ENCODE measurements at regions of chr4 and their contacts with region 1.

Region 1: GRCh38 chr4:158253350-158253980 is 43.2 kb downstream of the TMEM144 start:
- DNase-seq: peak in 1 of 2 experiments; percentile 10
- H3K4me3 ChIP-seq: no peak overlapping the region
- H3K27ac ChIP-seq: no peak overlapping the region
- H3K4me1 ChIP-seq: no peaks in the 10 kb centered on the region
- H3K27me3 ChIP-seq: no peaks in the 10 kb centered on the region
- CTCF ChIP-seq: peak; percentile 59

Region 2: DNA sequence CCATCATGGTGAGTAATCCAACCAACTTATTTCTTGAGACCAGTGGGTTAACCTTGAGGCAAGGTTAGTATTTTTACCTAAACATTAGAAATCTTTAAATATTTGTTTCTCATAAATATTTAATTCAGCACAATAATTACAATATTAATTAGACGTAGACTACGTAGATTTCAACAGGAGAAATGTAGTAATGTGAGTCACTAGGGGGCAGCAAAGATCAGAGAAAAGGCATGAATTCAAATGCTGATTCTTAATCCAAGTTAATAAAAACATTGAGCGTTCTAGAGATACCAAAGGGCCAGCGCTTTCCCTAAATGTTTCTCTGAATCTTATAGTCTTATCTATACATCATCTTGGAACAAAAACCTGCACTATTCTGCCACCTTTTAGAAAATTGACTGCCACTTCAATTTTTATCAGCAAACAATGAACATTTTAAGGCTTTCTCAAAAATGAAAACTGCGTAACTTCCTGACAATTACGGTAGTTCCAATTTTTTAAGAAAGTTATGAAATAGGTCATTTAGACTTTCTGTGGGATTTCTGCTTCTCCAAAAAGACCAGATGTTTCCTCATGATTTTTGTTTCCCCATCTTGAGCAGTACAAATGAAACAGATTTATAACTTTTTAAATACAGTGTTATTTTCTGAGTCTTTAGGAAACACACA is 261.3 kb before region 1 on chr4:
- CTCF ChIA-PET with region 1: no interaction called
- POLR2A ChIA-PET with region 1: no interaction called
- intact Hi-C with region 1: loop called (anchors 1 kb)
- DNase-seq: peak in 1 of 2 experiments; percentile 30
- H3K4me3 ChIP-seq: no peak overlapping the region
- H3K27ac ChIP-seq: no peak overlapping the region
- H3K4me1 ChIP-seq: peaks cover 9% of the 10 kb centered on the region
- H3K27me3 ChIP-seq: no peaks in the 10 kb centered on the region
- CTCF ChIP-seq: peak; percentile 84

Region 3: DNA sequence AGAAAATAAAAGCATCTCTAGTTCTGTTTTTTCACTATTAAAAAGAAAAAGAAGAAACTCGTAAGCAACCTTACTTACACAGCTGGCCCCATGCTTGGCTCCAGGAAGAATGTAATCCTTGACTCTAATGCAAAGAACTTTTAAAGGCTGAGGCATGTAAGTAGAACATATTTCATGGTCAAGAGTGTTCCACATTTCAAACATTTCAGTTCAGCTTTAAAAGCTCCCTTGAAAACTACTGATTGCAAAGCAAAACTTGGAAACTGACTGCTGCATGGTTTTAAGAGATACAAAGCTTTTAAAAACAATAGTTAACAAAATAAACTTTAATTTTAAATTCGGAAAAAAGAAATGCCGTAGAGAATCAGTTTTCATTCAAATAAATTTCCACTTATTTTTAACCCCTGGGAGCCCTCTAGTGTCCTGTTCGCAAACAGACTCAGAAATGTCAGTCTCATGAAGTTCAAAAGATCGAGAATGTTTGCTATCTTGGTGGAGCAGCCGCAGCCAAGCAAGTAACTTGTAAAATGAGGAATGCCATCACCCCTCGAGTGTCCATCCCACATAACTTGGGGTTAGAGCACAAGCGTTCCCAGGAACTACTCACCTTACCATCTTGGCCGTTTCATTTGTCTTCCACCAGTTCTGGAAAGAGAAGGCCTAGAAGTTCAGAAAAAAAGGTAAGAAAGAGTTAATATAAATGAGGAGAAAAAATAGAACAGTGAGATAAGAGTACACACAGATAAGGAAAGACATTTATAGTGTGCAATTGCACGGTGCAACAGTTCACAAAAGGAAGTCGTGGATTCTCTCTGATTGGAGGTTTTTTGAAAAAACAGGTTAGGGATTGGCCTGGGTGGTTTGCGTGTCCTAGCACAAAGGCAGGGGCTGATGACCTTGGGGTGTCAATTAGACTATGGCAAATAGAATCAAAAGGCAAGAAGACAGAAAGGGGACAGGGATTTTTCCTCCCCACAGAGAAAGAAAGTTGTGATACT is 80.9 kb before region 1 on chr4 and contains the start of gene GASK1B:
- CTCF ChIA-PET with region 1: no interaction called
- POLR2A ChIA-PET with region 1: no interaction called
- intact Hi-C with region 1: loop called (anchors 5 kb)
- DNase-seq: peak; percentile 29 to 37
- H3K4me3 ChIP-seq: no peak within 1 kb of the TSS; the same call in 1 of the 2 replicates
- H3K27ac ChIP-seq: no peak within 1 kb of the TSS
- H3K4me1 ChIP-seq: peaks cover 30% of the 10 kb centered on the region
- H3K27me3 ChIP-seq: no peaks in the 10 kb centered on the region
- CTCF ChIP-seq: peak; percentile 76
- total RNA-seq, gene GASK1B: 2.8 and 4.1 TPM in 2 replicates

Region 4: DNA sequence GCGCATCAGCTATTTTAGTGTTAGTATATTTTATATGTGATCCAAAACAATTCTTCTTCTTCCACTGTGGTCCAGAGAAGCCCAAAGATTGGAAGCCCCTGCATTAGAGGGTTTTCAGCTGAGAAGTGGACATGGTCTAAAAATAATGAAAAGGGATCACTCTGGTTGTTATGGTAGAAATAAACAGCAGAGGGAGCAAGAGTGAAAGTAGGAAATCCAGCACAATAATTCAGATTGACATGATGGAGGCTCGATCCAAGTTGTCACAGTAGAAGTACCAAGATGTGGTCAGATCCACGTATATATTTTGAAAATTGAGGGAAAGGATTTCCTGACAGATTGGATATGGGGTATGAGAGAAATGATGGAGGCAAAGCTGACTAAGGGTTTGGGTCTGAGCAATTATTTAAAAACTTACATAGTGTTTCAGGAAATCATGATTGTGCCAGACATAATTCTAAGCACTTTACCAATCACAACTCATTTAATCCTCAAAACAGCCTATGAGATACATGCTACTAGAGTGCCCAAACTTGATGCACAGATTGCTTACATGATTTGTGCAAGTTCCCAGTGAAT is 60.2 kb before region 1 on chr4:
- CTCF ChIA-PET with region 1: interaction called, 19 read pairs
- POLR2A ChIA-PET with region 1: no interaction called
- intact Hi-C with region 1: loop called (anchors 1 kb)
- DNase-seq: no peak
- H3K4me3 ChIP-seq: no peak overlapping the region
- H3K27ac ChIP-seq: no peak overlapping the region
- H3K4me1 ChIP-seq: no peaks in the 10 kb centered on the region
- H3K27me3 ChIP-seq: no peaks in the 10 kb centered on the region
- CTCF ChIP-seq: peak; percentile 66

Region 5: GRCh38 chr4:158209825-158210807 is 43.3 kb before region 1 on chr4 and contains the start of gene TMEM144:
- CTCF ChIA-PET with region 1: interaction called, 4 read pairs
- POLR2A ChIA-PET with region 1: no interaction called
- intact Hi-C with region 1: loop called (anchors 5 kb)
- DNase-seq: peak; percentile 87 to 94
- H3K4me3 ChIP-seq: peak within 1 kb of the TSS; percentile 76
- H3K27ac ChIP-seq: peak within 1 kb of the TSS; percentile 86
- H3K4me1 ChIP-seq: no peaks in the 10 kb centered on the region; the same call in 1 of the 2 replicates
- H3K27me3 ChIP-seq: no peaks in the 10 kb centered on the region
- CTCF ChIP-seq: no peak
- total RNA-seq, gene TMEM144: 9.2 and 13.4 TPM in 2 replicates

Region 6: GRCh38 chr4:158347556-158347955 is 94.1 kb after region 1 on chr4:
- CTCF ChIA-PET with region 1: no interaction called
- POLR2A ChIA-PET with region 1: no interaction called
- intact Hi-C with region 1: no loop called
- DNase-seq: no peak
- H3K4me3 ChIP-seq: no peak overlapping the region
- H3K27ac ChIP-seq: no peak overlapping the region
- H3K4me1 ChIP-seq: no peaks in the 10 kb centered on the region
- H3K27me3 ChIP-seq: no peaks in the 10 kb centered on the region
- CTCF ChIP-seq: no peak

Region 7: DNA sequence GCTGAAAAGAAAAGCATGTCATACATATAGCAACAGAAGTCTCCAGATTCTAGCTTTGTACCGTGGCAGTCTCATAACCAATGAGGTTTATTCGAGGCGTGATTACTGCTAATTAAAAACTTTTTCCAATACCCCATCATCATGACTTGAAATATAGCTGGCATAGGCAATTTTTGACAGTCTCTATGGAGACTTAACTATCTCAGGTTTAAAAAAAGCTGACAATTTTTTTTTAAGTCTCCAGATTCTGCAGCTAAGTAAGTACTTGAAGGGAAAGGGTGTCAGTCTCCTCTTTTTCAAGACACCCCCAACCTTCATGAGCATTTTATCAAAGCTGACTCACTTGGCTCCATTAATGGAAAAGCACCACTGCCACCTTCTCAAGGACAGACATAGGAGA is 141.9 kb after region 1 on chr4:
- CTCF ChIA-PET with region 1: no interaction called
- POLR2A ChIA-PET with region 1: no interaction called
- intact Hi-C with region 1: no loop called
- DNase-seq: no peak
- H3K4me3 ChIP-seq: no peak overlapping the region
- H3K27ac ChIP-seq: no peak overlapping the region
- H3K4me1 ChIP-seq: no peaks in the 10 kb centered on the region
- H3K27me3 ChIP-seq: no peaks in the 10 kb centered on the region
- CTCF ChIP-seq: no peak

Region 8: DNA sequence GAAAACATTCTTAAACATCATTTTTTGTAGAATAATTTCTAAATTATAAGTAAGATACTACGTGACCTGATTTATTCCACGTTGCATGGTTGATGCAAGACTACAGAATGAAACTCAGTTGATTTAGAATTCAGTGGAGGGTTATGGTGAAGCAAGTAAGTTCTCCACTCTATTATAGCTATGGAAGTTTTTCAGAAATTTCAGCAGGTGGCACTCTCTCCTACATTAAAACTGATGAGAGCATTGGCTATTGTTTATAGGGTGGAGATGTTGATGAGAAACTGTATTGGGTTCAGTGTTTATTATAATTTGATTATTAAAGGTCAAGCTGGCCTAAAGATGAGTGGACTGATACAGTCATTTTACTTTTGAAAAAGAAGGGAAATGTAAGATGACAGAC is 603.4 kb after region 1 on chr4:
- CTCF ChIA-PET with region 1: no interaction called
- POLR2A ChIA-PET with region 1: no interaction called
- intact Hi-C with region 1: loop called (anchors 10 kb)
- DNase-seq: peak in 1 of 2 experiments; percentile 52
- H3K4me3 ChIP-seq: no peak overlapping the region
- H3K27ac ChIP-seq: no peak overlapping the region
- H3K4me1 ChIP-seq: no peaks in the 10 kb centered on the region
- H3K27me3 ChIP-seq: no peaks in the 10 kb centered on the region
- CTCF ChIP-seq: peak; percentile 73